Activated naive CD4-positive, alpha-beta T cell treated with anti-CD3 and anti-CD28 coated beads for 36 hours (primary cell): ENCODE measurements at regions of chr19 and their contacts with region 1.

Region 1: GRCh38 chr19:36114763-36115452 is at the start of gene POLR2I:
- DNase-seq: peak; percentile 99
- H3K4me3 Mint-ChIP-seq: peak within 1 kb of the TSS; percentile 99
- H3K27ac Mint-ChIP-seq: peak within 1 kb of the TSS; percentile 91
- H3K4me1 Mint-ChIP-seq: peaks cover 31% of the 10 kb centered on the region
- H3K27me3 Mint-ChIP-seq: no peaks in the 10 kb centered on the region
- total RNA-seq, gene POLR2I: 86.8 to 87.4 TPM

Region 2: GRCh38 chr19:35995048-35995993 is 119.6 kb before region 1 on chr19 and contains the start of gene SDHAF1:
- CTCF ChIA-PET with region 1: no interaction called
- intact Hi-C with region 1: loop called (anchors 2 kb)
- DNase-seq: peak; percentile 97
- H3K4me3 Mint-ChIP-seq: peak within 1 kb of the TSS; percentile 97
- H3K27ac Mint-ChIP-seq: peak within 1 kb of the TSS; percentile 89
- H3K4me1 Mint-ChIP-seq: peaks cover 37% of the 10 kb centered on the region
- H3K27me3 Mint-ChIP-seq: no peaks in the 10 kb centered on the region
- total RNA-seq, gene SDHAF1: 13.1 to 13.8 TPM

Region 3: GRCh38 chr19:36132489-36132891 is 17.6 kb after region 1 on chr19:
- CTCF ChIA-PET with region 1: interaction called, 5 read pairs
- intact Hi-C with region 1: loop called (anchors 1 kb)
- DNase-seq: peak; percentile 61
- H3K4me3 Mint-ChIP-seq: no peak overlapping the region
- H3K27ac Mint-ChIP-seq: peak overlapping the region; percentile 18
- H3K4me1 Mint-ChIP-seq: peaks cover 32% of the 10 kb centered on the region
- H3K27me3 Mint-ChIP-seq: no peaks in the 10 kb centered on the region